ENCODE measurements at regions of chr18 and their contacts with region 1.

Region 1: GRCh38 chr18:47772374-47773248 is 157.8 kb downstream of the SMAD2 start:
- DNase-seq: peak; percentile 81
- H3K4me3 ChIP-seq: no peak overlapping the region
- H3K27ac ChIP-seq: no peak overlapping the region
- H3K4me1 ChIP-seq: no peaks in the 10 kb centered on the region
- H3K27me3 ChIP-seq: no peaks in the 10 kb centered on the region
- CTCF ChIP-seq: peak; percentile 89

Region 2: DNA sequence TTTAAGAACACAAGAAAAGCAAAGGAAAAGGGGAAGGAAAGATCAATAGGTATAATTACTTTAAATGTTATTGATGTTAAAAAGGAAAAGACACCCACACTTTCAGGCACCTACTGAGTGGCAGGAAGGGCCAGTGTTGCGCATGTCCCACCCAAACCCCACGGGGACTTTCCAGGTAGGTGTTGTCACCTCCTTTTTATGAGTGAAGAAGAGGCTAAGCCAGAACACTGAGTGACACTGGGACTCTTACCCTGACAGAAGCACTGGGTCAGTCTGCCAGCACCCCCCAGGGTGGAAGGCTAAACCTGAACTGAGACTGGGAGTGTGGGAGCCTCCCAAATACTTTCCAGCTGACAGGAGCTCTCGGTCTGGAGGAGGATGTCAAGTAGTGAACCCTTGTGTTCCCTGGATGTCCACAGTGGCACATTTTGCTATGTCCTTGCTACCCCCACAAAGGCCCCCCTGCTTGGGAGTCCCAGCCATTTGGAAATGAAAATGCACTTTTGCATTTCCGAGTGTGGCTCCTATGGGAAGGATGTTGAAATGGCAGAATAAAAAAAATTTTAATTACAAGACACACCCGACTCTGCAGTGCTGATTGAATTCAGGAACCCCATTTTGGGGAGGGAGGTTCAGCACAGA is 248.8 kb after region 1 on chr18:
- intact Hi-C with region 1: loop called (anchors 2 kb)
- DNase-seq: no peak
- H3K4me3 ChIP-seq: no peak overlapping the region
- H3K27ac ChIP-seq: no peak overlapping the region
- H3K4me1 ChIP-seq: no peaks in the 10 kb centered on the region
- H3K27me3 ChIP-seq: no peaks in the 10 kb centered on the region
- CTCF ChIP-seq: no peak

Region 3: GRCh38 chr18:48345596-48345995 is 573.0 kb after region 1 on chr18:
- intact Hi-C with region 1: loop called (anchors 10 kb)
- DNase-seq: peak; percentile 41
- H3K4me3 ChIP-seq: no peak overlapping the region
- H3K27ac ChIP-seq: no peak overlapping the region
- H3K4me1 ChIP-seq: no peaks in the 10 kb centered on the region
- H3K27me3 ChIP-seq: no peaks in the 10 kb centered on the region
- CTCF ChIP-seq: peak; percentile 27

Region 4: GRCh38 chr18:48445540-48445939 is 672.9 kb after region 1 on chr18:
- intact Hi-C with region 1: loop called (anchors 10 kb)
- DNase-seq: peak; percentile 87
- H3K4me3 ChIP-seq: no peak overlapping the region
- H3K27ac ChIP-seq: no peak overlapping the region
- H3K4me1 ChIP-seq: no peaks in the 10 kb centered on the region
- H3K27me3 ChIP-seq: no peaks in the 10 kb centered on the region
- CTCF ChIP-seq: peak; percentile 90

Measured in colonic mucosa (tissue), 4 donors.